Activated naive CD4-positive, alpha-beta T cell treated with anti-CD3 and anti-CD28 coated beads for 36 hours (primary cell): ENCODE measurements at regions of chr9 and their contacts with region 1.

Region 1: DNA sequence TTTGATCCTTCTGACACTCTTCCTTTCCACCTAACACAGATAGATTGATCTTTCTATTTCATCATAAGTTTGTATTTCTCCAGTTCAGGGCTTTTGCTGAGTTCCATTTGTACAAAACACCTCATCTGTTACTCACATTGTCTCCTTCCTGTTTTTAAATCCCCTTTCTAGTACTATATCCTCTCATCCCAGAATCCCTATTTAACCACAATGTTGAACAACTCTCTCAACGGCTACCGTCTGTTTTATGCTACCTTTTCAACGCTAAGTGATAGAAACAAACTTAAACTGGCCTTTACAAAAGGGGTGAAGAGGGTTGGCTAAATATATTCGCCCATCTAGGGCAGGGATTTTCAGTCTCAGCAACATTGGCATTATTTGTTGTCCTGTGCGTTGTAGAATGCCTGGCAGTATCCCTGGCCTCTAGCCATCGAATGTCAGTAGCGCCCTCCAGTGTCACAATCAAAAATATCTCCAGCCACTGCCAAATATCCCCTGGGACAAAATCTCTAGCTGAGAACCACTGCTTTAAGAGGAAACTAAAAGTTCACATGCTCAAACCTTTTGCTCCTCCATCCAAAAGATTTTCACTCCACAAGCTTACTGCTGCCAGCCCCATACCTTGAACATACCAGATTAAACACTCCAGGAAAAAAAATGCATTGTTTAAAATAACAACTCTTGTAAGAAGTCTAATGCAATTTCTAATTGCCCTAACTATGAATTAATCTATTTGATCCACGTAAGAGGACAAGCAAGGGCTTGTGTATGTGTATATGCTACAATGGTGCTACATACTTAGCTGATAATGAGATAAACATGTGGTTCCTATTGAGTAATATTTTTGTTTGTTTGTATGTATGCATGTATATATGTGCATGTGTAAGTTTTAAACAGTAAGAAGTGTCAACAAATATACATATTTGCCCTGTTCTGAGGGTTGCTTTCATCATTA is 344.0 kb downstream of the PTPRD start:
- DNase-seq: peak; percentile 6
- H3K4me3 Mint-ChIP-seq: no peak overlapping the region
- H3K27ac Mint-ChIP-seq: no peak overlapping the region
- H3K4me1 Mint-ChIP-seq: no peaks in the 10 kb centered on the region
- H3K27me3 Mint-ChIP-seq: no peaks in the 10 kb centered on the region

Region 2: DNA sequence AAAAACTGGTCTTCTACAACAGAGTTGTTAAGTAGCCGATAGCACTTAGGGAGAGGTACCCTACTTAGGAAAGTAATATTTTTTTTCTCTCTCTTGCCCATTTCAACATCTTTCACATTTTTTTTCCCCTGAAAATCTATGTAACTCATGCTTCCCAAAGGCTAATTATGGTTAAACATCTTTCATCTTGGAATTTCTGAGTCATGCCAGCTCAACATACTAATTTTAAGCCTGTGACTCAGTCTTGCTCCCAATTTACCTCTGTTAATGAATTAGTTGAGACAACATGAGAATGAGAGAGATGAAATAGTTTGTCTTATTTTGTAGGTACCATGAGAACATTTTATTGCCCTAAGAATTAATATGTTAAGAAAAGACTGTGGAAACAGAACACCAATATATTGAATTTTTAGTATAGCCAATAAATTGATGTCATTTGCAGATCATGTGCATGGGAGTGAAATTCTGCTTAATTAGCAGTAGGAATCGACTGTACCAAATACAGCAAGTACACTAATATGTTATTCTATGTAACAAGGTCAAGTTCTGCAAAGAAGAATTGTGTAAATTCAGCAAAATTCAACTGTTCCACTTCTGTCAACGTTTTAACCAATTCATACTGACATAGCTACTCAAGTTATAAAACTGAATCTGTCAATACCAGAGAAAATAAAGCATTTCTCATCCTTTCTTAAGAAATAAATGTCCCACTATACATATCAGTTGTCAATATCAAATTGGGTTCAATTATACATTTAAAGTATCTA is 206.0 kb before region 1 on chr9:
- CTCF ChIA-PET with region 1: interaction called, 3 read pairs
- intact Hi-C with region 1: loop called (anchors 5 kb)
- DNase-seq: no peak
- H3K4me3 Mint-ChIP-seq: no peak overlapping the region
- H3K27ac Mint-ChIP-seq: no peak overlapping the region
- H3K4me1 Mint-ChIP-seq: no peaks in the 10 kb centered on the region
- H3K27me3 Mint-ChIP-seq: no peaks in the 10 kb centered on the region